ENCODE measurements at regions of chrX and their contacts with region 1.

Region 1: DNA sequence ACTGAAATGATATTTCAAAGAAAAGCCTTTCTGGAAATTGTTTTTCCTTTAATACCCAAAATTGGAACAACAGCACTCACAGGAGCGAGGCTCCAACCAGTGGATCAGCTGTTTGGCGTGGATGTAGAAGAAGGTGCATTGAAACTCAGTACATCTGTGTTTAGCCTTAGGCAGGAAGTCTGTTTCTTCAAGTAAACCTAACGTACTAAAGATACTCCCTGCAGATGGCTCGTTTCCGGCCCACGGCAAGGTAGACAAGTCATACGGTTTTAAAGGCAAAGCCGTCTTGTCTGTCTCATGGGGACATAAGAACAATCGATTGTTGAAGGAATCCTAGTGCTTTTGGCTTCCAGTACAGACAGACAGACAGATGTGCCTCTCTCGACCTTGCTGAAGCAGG is 50.0 kb upstream of the CLCN4 start:
- DNase-seq: no peak
- H3K4me3 ChIP-seq: no peak overlapping the region
- H3K27ac ChIP-seq: no peak overlapping the region
- H3K4me1 ChIP-seq: no peaks in the 10 kb centered on the region
- H3K27me3 ChIP-seq: no peaks in the 10 kb centered on the region
- CTCF ChIP-seq: no peak

Region 2: GRCh38 chrX:10007621-10008020 is 99.2 kb before region 1 on chrX:
- CTCF ChIA-PET with region 1: no interaction called
- dilution Hi-C with region 1: no loop called
- in situ Hi-C with region 1: loop called in 1 of 2 experiments (anchors 10 kb)
- intact Hi-C with region 1: no loop called
- DNase-seq: no peak
- H3K4me3 ChIP-seq: no peak overlapping the region
- H3K27ac ChIP-seq: no peak overlapping the region
- H3K4me1 ChIP-seq: peaks cover 16% of the 10 kb centered on the region
- H3K27me3 ChIP-seq: no peaks in the 10 kb centered on the region
- CTCF ChIP-seq: no peak

Measured in mammary epithelial cell (primary cell).